ENCODE measurements at regions of chr12 and their contacts with region 1.

Region 1: DNA sequence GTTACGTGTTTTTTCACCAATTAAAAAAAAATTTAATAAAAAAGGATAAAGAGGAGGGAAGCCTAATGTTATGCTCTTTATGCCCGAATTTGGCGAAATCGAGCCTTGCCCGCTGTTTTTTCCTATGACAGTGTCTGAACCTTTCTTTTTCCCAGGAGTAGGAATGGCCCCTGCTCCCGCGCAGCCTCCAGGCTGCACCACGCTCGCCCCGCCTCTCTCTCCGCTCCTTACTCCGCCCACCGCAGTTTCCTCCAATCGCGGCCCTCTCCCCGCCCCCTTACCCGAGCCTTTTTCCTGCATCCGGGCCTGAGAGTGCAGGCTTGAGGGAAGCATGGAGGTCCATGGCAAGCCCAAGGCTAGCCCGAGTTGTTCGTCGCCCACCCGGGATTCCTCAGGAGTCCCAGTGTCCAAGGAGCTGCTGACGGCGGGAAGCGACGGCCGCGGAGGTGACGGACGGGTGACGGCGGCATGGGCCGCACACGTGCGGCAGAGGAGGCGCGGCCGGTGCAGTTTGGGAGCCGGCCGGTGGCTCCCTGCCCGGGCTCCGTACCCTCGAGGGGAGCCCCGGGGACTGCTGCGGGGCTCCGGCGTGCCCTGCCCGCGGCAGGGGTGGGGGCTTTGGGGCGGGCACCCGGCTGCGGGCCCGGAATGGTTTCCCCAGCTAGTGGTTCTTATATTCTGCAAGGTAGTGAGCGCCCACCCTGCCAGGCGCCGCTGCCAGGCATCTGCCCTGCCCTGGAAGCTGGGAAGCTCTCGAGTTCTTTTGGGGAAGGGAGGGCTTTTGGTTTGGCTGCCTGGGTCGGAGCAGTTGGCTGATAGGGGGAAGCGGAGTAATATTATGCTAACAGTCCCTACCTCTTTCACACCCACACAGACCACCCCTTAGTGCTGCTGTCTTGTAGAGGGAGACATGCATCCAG is at the start of gene NOPCHAP1:
- DNase-seq: peak; percentile 85
- H3K4me3 ChIP-seq: peak within 1 kb of the TSS; percentile 51 to 94 (median 88)
- H3K27ac ChIP-seq: peak within 1 kb of the TSS; percentile 54
- H3K4me1 ChIP-seq: peaks cover 14% of the 10 kb centered on the region
- H3K27me3 ChIP-seq: no peaks in the 10 kb centered on the region
- CTCF ChIP-seq: no peak
- total RNA-seq, gene NOPCHAP1: 5.2 to 29.6 TPM

Region 2: GRCh38 chr12:104958009-104958945 is 28.0 kb before region 1 on chr12 and contains the start of gene SLC41A2:
- CTCF ChIA-PET with region 1: no interaction called
- dilution Hi-C with region 1: no loop called
- in situ Hi-C with region 1: no loop called
- intact Hi-C with region 1: loop called (anchors 1 kb)
- DNase-seq: peak; percentile 86
- H3K4me3 ChIP-seq: peak within 1 kb of the TSS; percentile 72 to 96 (median 86)
- H3K27ac ChIP-seq: peak within 1 kb of the TSS; percentile 68
- H3K4me1 ChIP-seq: peaks cover 18% of the 10 kb centered on the region
- H3K27me3 ChIP-seq: no peaks in the 10 kb centered on the region
- CTCF ChIP-seq: peak; percentile 10 to 47
- total RNA-seq, gene SLC41A2: 11.9 to 17.8 TPM

Region 3: DNA sequence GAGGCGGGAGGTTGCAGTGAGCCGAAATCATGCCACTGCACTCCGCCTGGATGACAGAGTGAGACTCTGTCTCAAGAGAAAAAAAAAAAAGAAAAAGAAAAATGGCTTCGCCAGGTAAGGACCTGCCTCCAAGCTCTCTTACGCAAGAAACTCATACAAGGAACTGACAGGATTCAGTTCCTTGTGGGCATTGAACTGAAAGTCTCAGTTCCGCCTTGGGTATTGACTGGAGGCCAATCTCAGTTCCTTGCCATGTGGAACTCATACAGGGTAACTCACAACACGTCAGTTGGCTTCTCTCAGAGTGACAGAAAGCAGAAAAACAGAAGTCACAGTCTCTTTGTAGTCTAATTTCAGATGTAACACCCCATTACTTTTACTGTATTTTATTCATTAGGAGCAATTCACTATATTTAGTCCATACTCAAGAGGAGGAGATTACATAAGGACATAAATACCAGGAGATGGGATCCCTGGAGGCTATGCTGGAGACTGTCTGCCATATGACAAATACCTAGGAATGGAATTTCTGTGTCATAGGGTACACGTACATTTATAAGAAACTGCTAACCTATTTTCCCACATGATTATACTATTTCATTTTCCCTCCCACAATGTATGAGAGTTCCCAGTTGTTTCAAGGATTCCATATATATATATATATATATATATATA is 11.5 kb before region 1 on chr12:
- CTCF ChIA-PET with region 1: no interaction called
- dilution Hi-C with region 1: no loop called
- in situ Hi-C with region 1: no loop called
- intact Hi-C with region 1: loop called (anchors 1 kb)
- DNase-seq: peak; percentile 72
- H3K4me3 ChIP-seq: no peak overlapping the region
- H3K27ac ChIP-seq: no peak overlapping the region
- H3K4me1 ChIP-seq: peaks cover 30% of the 10 kb centered on the region
- H3K27me3 ChIP-seq: no peaks in the 10 kb centered on the region
- CTCF ChIP-seq: no peak

Measured in mammary epithelial cell (primary cell).